ENCODE measurements at regions of chr17 and their contacts with region 1.

Region 1: DNA sequence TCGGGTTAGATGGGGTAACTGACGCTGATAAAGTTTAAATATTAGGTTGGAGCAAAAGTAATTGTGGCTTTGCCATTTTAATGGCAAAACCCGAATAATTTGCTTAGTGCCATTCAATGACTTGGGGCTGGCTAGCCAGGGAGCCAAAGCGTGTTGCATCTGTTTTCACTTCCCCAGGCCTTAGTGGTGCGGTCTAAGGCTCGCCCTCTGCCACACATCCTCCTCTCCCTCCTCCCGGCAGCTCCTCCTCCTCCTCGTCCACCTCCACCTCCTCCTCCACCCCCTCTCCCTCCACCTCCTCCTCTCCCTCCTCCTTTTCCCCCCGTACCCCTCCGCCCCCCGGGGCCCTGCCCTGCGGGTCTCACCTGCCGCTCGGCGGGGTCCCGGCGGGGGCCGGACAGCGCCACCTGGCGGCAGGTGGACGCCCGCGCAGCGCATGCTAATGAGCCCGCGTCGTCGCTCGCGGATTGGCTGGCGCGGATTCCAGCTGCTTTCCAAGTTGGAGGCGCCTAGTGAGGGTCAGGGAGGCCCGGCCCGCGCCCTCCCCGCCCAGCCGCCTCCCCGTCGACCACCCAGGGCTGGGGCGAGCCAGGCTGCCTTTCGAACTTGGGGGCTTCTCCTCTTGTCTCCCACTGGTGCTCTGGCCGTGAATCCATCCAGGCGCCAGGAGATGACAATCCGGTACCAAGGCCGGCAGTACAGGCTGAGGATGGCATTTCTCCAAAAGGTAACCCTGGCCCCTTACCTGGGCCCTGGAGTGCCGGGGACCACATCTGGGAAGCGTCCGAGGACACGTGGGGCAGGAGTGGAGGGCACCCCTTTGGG is 36.6 kb upstream of the RGS9 start:
- DNase-seq: peak; percentile 66
- H3K4me3 ChIP-seq: peak overlapping the region in 2 of 3 experiments; percentile 19 to 51
- H3K27ac ChIP-seq: peak overlapping the region; percentile 30
- H3K4me1 ChIP-seq: peaks cover 34% of the 10 kb centered on the region
- H3K27me3 ChIP-seq: no peaks in the 10 kb centered on the region
- CTCF ChIP-seq: peak; percentile 48 to 86

Region 2: GRCh38 chr17:64781014-64781753 is 319.3 kb before region 1 on chr17:
- CTCF ChIA-PET with region 1: no interaction called
- dilution Hi-C with region 1: no loop called
- in situ Hi-C with region 1: no loop called
- intact Hi-C with region 1: loop called (anchors 10 kb)
- DNase-seq: peak; percentile 42
- H3K4me3 ChIP-seq: peak overlapping the region; percentile 48 to 54 (median 53)
- H3K27ac ChIP-seq: no peak overlapping the region
- H3K4me1 ChIP-seq: peaks cover 28% of the 10 kb centered on the region
- H3K27me3 ChIP-seq: no peaks in the 10 kb centered on the region
- CTCF ChIP-seq: no peak

Region 3: GRCh38 chr17:65027305-65027704 is 73.2 kb before region 1 on chr17:
- CTCF ChIA-PET with region 1: interaction called, 8 read pairs
- dilution Hi-C with region 1: no loop called
- in situ Hi-C with region 1: no loop called
- intact Hi-C with region 1: loop called (anchors 1 kb)
- DNase-seq: peak; percentile 74
- H3K4me3 ChIP-seq: no peak overlapping the region
- H3K27ac ChIP-seq: peak overlapping the region; percentile 51
- H3K4me1 ChIP-seq: peaks cover 20% of the 10 kb centered on the region
- H3K27me3 ChIP-seq: no peaks in the 10 kb centered on the region
- CTCF ChIP-seq: peak; percentile 30 to 36

Region 4: DNA sequence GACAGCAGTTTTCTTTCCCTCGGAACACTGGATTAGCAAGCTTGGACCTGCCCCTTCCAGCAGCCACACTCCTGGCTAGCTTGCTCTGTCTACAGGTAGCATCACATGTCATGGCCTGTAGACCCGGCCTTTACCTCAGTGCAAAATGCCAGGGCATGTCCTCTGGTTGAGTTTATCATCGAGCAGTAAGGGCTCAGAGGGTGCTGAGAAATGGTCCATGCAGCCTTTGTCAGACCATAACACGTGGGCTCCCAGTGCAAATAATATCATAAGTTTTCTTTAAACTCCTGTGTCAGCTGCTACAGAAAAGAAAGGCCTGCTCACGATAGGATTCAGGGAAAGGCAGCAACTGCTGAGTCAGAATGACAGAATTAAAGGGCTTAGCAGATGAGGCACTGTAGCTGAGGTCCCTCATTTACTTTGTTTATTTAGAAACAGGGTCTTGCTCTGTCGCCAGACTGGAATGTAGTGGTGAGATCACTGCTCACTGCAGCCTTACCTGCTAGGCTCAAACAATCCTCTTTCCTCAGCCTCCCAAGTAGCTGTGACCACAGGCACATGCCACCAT is 36.0 kb before region 1 on chr17:
- CTCF ChIA-PET with region 1: no interaction called
- dilution Hi-C with region 1: loop called (anchors 5 kb)
- in situ Hi-C with region 1: loop called in 1 of 2 experiments (anchors 5 kb)
- intact Hi-C with region 1: no loop called
- DNase-seq: peak; percentile 96
- H3K4me3 ChIP-seq: peak overlapping the region in 1 of 3 experiments; percentile 14
- H3K27ac ChIP-seq: peak overlapping the region; percentile 62
- H3K4me1 ChIP-seq: peaks cover 45% of the 10 kb centered on the region
- H3K27me3 ChIP-seq: no peaks in the 10 kb centered on the region
- CTCF ChIP-seq: no peak

Region 5: DNA sequence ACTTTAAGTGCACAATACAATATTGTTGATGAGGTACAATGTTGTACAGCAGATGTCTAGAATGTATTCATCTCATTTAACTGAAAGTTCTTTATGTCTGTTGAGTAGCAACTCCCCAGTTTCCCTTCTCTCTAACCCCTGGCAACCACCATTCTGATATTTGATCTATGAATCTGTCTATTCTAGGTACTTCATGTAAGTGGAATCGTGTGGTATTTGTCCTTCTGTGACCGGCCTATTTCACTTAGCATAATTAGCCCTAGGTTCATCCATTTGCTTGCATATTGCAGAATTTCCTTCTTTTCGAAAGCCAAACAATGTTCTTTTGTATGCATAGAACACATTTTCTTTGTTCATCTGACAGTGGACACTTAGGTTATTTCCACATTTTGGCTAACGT is 47.4 kb after region 1 on chr17:
- CTCF ChIA-PET with region 1: no interaction called
- dilution Hi-C with region 1: no loop called
- in situ Hi-C with region 1: no loop called
- intact Hi-C with region 1: no loop called
- DNase-seq: no peak
- H3K4me3 ChIP-seq: no peak overlapping the region
- H3K27ac ChIP-seq: no peak overlapping the region
- H3K4me1 ChIP-seq: no peaks in the 10 kb centered on the region
- H3K27me3 ChIP-seq: peaks cover 5% of the 10 kb centered on the region
- CTCF ChIP-seq: no peak

Region 6: GRCh38 chr17:65198653-65199382 is 98.3 kb after region 1 on chr17:
- CTCF ChIA-PET with region 1: no interaction called
- dilution Hi-C with region 1: no loop called
- in situ Hi-C with region 1: no loop called
- intact Hi-C with region 1: loop called (anchors 1 kb)
- DNase-seq: peak; percentile 35
- H3K4me3 ChIP-seq: no peak overlapping the region
- H3K27ac ChIP-seq: no peak overlapping the region
- H3K4me1 ChIP-seq: peaks cover 10% of the 10 kb centered on the region
- H3K27me3 ChIP-seq: no peaks in the 10 kb centered on the region
- CTCF ChIP-seq: peak; percentile 64 to 70